Left cardiac atrium (tissue), 4 donors: ENCODE measurements at regions of chr1 and their contacts with region 1.

Region 1: DNA sequence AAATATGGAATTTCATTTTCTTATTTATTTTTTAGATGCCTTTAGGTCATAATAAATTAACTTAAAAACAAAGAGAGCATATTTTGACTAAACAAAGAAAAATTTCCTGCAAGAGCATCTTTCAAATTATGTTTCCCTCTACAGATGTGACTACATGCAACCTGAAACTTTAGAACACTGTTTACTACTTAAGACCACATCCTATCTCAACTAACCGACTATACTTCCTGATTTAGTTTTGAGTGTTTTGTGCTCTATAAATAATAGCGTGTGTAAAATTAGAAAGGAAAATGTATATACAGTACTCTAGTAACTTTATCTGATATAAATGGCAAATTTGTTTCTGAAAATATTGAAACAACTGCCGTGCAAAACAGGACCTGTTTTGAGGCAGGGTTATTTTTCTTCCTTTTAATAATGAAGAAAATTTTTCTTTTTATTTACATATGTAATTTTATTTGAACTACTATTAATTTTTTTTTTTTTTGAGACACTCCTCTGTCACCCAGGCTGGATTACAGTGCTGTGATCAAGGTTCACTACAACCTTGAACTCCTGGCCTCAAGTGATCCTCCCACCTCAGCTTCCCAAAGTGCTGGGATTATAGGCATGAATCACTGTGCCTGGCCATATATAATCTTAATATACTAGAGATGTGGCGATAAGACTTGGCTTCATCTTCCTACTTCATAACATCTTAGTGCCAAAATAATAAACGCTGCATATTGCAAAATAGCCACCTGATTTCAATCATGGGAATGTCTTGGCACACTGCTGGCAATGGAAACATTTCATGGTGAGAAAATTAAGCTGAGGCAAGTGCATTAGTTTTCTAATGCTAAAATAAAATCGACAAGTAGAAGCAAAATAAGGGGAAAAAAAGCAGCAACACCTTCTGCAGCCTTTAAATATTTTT is 12.3 kb downstream of the ZRANB2 start:
- DNase-seq: no peak
- ATAC-seq: no peak

Region 2: GRCh38 chr1:70247768-70248167 is 820.8 kb before region 1 on chr1:
- intact Hi-C with region 1: loop called in 1 of 2 experiments (anchors 10 kb)
- DNase-seq: no peak
- ATAC-seq: no peak

Region 3: DNA sequence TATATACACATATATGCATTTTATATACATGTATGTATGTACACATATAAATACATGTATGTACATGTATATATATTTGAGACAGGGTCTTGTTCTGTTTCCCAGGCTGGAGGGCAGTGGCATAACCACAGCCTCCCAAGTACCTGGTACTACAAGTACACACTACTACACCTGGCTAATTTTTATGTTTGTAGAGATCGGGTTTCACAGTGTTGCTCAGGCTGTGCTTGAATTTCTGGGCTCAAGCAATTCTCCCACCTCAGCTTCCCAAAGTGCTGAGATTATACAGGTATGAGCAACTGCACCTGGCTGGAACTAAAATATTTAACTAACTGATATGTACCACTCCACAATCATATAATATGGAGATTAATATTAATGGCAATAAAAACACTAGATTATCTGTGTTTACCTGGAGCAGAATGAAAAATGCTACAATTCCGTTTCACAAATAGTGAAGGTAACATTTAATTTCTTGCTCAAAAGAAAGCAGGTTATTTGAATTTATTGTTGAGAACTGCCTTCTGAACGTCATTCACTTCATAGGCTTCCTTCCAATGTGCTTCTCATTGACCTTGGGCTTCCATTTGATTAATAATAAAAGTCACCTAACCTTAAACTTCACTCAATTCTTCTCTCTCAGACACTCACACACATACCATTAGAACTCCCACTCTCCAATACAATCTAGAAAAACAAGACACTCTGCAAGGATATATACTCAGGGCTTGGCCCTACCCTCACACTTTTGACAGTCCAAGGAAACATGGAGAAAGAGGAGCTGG is 77.9 kb before region 1 on chr1:
- intact Hi-C with region 1: no loop called
- DNase-seq: no peak
- ATAC-seq: no peak